Mammary epithelial cell (primary cell): ENCODE measurements at regions of chr3 and their contacts with region 1.

Region 1: DNA sequence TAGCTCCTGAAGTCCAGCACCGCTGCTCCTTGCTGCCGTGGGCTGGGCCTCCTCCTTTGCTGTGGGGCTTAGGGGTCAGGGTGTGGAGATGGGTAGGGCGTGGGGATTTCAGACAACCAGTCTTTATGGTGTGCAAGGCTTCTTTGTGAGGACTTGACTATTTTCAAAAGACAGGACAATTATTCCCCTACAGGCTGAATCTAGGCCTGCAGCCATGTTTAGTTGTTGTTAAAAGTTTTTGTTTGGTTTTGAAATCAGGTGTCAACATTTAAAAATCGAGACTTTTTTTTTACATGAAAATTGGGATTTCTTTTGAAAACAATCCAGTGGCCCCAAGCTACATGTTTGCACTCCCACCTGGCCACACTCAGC is 10.6 kb downstream of the RPL32 start:
- DNase-seq: no peak
- H3K4me3 ChIP-seq: no peak overlapping the region
- H3K27ac ChIP-seq: no peak overlapping the region
- H3K4me1 ChIP-seq: peaks cover 3% of the 10 kb centered on the region
- H3K27me3 ChIP-seq: no peaks in the 10 kb centered on the region
- CTCF ChIP-seq: peak; percentile 19 to 31

Region 2: GRCh38 chr3:12556671-12557472 is 273.9 kb before region 1 on chr3 and contains the start of gene MKRN2:
- CTCF ChIA-PET with region 1: no interaction called
- dilution Hi-C with region 1: no loop called
- in situ Hi-C with region 1: no loop called
- intact Hi-C with region 1: loop called (anchors 5 kb)
- DNase-seq: peak; percentile 89
- H3K4me3 ChIP-seq: peak within 1 kb of the TSS; percentile 95 to 97 (median 96)
- H3K27ac ChIP-seq: peak within 1 kb of the TSS; percentile 87
- H3K4me1 ChIP-seq: peaks cover 19% of the 10 kb centered on the region
- H3K27me3 ChIP-seq: no peaks in the 10 kb centered on the region
- CTCF ChIP-seq: no peak
- total RNA-seq, gene MKRN2: 26.3 to 35.0 TPM

Region 3: DNA sequence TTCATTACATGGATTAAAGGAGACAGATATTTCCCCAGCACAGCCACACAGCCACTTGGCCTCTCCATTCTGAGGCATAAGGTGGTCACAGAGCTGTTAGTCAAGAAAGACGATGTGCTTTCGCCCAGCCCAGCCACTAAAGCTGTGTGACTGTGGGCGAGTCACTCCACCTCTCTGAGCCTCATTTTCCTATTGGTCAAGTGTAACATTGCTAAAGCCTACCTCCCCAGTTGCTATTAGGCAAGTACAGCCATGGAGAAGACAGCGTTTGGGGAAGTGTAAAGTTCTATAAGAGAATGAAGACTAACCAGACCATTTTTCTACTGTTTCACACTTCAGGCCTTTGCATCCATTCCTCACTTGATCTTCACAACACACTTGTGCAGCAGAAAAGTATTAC is 95.8 kb before region 1 on chr3:
- CTCF ChIA-PET with region 1: no interaction called
- dilution Hi-C with region 1: loop called (anchors 5 kb)
- in situ Hi-C with region 1: no loop called
- intact Hi-C with region 1: no loop called
- DNase-seq: no peak
- H3K4me3 ChIP-seq: no peak overlapping the region
- H3K27ac ChIP-seq: no peak overlapping the region
- H3K4me1 ChIP-seq: peaks cover 9% of the 10 kb centered on the region
- H3K27me3 ChIP-seq: no peaks in the 10 kb centered on the region
- CTCF ChIP-seq: no peak

Region 4: GRCh38 chr3:12758025-12758830 is 72.5 kb before region 1 on chr3:
- CTCF ChIA-PET with region 1: no interaction called
- dilution Hi-C with region 1: no loop called
- in situ Hi-C with region 1: no loop called
- intact Hi-C with region 1: loop called (anchors 2 kb)
- DNase-seq: peak; percentile 46
- H3K4me3 ChIP-seq: peak overlapping the region; percentile 58 to 69 (median 65)
- H3K27ac ChIP-seq: peak overlapping the region; percentile 68
- H3K4me1 ChIP-seq: peaks cover 68% of the 10 kb centered on the region
- H3K27me3 ChIP-seq: no peaks in the 10 kb centered on the region
- CTCF ChIP-seq: no peak

Region 5: DNA sequence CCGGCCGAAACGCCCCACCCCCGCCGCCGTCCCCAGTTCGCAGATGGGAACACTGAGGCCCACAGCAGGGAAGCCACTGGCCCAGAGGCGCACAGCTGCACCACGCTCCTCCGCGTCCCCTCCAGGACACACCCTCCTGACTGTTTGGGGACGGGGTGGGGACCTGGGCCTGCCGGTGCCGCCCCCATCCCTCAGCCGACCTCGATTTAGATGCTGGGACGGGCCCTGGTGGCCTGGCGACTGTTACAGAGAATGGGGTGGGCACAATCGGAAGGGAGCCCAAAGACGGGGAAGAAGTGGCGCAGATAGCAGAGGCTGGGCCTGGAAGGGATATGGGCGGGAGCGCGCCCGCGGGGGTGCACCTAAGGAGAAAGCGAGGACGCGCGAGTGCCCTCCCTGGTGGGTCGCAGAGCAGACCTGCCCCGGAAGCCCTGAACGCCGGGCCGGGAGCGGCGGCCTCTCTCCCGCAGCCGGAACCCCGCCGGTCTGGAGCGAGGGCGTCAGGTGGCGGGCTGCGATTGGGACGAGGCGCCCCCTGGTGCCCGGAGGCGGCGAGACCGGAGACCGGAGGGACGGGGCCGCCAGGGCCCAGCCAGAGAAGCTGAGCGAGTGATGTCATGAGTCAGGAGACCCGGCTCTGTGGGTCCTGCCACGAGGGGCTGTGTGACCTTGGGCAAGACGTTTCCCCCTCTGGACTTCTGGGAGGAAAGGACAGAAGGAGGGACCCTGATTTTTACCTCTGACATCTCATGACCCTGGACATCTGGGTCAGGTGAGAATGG is 164.0 kb after region 1 on chr3:
- CTCF ChIA-PET with region 1: no interaction called
- dilution Hi-C with region 1: no loop called
- in situ Hi-C with region 1: no loop called
- intact Hi-C with region 1: no loop called
- DNase-seq: peak; percentile 68
- H3K4me3 ChIP-seq: peak overlapping the region; percentile 57 to 63 (median 62)
- H3K27ac ChIP-seq: no peak overlapping the region
- H3K4me1 ChIP-seq: peaks cover 17% of the 10 kb centered on the region
- H3K27me3 ChIP-seq: peaks cover 6% of the 10 kb centered on the region
- CTCF ChIP-seq: peak; percentile 53 to 84

Region 6: DNA sequence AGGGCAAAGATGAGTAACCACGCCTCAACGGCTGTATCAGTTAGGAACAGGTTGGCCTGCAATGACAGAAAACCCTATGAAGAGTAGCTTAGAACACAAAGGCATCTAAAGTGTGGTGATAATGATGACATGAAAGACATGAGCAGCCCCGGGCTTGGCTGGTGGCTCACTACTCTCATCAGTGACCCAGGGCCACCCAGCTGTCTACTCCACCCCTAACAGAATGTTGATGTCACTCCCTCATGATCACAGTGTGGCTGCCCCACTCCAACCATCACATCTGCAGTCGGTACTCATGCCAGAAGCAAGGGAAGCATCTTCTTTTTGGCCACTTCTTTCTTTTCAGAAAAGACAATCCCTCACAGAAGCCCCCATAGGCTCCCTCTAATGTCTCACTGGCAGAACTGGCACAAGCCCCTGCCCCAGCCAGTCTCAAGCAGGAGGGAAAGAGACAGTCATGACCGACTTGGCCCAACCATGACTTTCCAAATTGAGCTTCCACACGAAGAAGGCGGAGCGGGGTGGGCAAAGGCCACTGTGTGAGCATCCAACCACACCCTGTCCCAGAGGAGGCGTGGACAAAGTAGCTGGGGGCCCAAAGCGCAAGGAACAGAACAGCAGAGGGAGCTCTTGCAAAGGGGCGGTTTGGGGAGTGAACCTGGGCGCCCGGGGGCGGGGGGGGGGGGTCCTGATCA is 314.5 kb after region 1 on chr3:
- CTCF ChIA-PET with region 1: no interaction called
- dilution Hi-C with region 1: no loop called
- in situ Hi-C with region 1: no loop called
- intact Hi-C with region 1: no loop called
- DNase-seq: no peak
- H3K4me3 ChIP-seq: no peak overlapping the region
- H3K27ac ChIP-seq: no peak overlapping the region
- H3K4me1 ChIP-seq: no peaks in the 10 kb centered on the region
- H3K27me3 ChIP-seq: no peaks in the 10 kb centered on the region
- CTCF ChIP-seq: no peak